Endothelial cell of umbilical vein (primary cell): ENCODE measurements at regions of chr3 and their contacts with region 1.

Region 1: GRCh38 chr3:63538919-63539318 is 113.6 kb upstream of the SNTN start:
- DNase-seq: no peak
- H3K4me3 ChIP-seq: no peak overlapping the region
- H3K27ac ChIP-seq: no peak overlapping the region
- H3K4me1 ChIP-seq: no peaks in the 10 kb centered on the region
- H3K27me3 ChIP-seq: no peaks in the 10 kb centered on the region
- CTCF ChIP-seq: no peak
- POLR2A ChIP-seq: no peak

Region 2: GRCh38 chr3:63507277-63507676 is 31.6 kb before region 1 on chr3:
- CTCF ChIA-PET with region 1: no interaction called
- POLR2A ChIA-PET with region 1: no interaction called
- dilution Hi-C with region 1: no loop called
- intact Hi-C with region 1: loop called (anchors 1 kb)
- DNase-seq: no peak
- H3K4me3 ChIP-seq: no peak overlapping the region
- H3K27ac ChIP-seq: no peak overlapping the region
- H3K4me1 ChIP-seq: no peaks in the 10 kb centered on the region
- H3K27me3 ChIP-seq: no peaks in the 10 kb centered on the region
- CTCF ChIP-seq: no peak
- POLR2A ChIP-seq: no peak